ENCODE measurements at regions of chr10 and their contacts with region 1.

Region 1: GRCh38 chr10:511101-511848 is 178.2 kb downstream of the DIP2C start:
- DNase-seq: peak; percentile 96
- H3K4me3 ChIP-seq: no peak overlapping the region
- H3K27ac ChIP-seq: no peak overlapping the region
- H3K4me1 ChIP-seq: peaks cover 3% of the 10 kb centered on the region
- H3K27me3 ChIP-seq: no peaks in the 10 kb centered on the region
- CTCF ChIP-seq: peak; percentile 98 to 99
- POLR2A ChIP-seq: no peak

Region 2: DNA sequence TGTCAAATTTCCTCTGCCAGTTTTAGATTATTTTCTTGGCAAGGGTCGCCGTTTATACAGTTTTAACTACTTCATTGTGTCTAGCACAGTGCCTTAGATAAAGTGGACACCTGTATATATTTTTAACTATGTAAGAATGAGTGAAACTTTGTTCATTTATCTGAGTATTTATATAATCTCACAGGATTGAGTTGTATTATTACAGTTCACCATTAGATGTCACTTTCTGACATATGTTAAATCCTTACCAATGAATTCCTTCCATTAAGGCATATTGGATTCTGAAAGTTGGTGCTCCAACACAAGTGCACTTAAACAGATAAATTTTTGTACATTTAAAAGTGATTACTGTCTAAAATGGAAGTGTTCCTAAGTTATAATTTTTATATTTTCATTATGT is 333.1 kb before region 1 on chr10:
- CTCF ChIA-PET with region 1: no interaction called
- POLR2A ChIA-PET with region 1: no interaction called
- dilution Hi-C with region 1: no loop called
- intact Hi-C with region 1: loop called (anchors 1 kb)
- DNase-seq: peak; percentile 66
- H3K4me3 ChIP-seq: no peak overlapping the region
- H3K27ac ChIP-seq: no peak overlapping the region
- H3K4me1 ChIP-seq: peaks cover 19% of the 10 kb centered on the region
- H3K27me3 ChIP-seq: no peaks in the 10 kb centered on the region
- CTCF ChIP-seq: peak; percentile 10 to 24
- POLR2A ChIP-seq: no peak

Region 3: DNA sequence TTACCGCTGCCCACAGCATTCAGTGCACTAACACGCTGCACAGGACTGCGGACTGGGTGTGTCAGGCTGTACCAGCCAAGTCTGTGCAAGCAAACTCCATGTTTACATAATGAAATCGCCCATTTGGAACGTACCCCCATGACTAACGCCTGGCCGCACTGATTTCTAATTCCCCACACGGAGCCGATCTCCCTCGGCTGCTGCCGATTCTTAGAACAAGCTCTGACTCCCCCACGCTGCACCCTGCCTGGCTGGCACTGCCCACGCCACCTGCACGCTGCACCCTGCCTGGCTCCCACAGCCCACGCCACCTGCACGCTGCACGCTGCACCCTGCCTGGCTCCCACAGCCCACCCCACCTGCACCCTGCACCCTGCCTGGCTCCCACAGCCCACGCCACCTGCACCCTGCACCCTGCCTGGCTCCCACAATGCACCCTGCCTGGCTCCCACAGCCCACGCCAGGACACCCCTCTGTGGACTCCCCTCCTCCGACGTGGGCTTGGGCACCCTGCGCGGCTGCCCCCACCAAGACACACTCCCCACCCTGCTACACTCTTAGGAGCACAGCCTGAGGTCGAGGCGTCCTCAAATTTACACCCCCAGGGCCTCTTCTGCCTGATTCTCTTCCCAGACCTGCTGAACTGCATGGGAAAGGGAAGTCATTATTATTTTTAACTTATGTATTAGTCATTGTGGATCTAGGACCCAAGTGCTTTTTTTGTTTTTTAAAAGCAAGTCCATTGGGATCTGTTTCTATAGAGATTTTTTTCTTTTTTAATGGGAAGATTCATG is 172.6 kb before region 1 on chr10:
- CTCF ChIA-PET with region 1: no interaction called
- POLR2A ChIA-PET with region 1: no interaction called
- dilution Hi-C with region 1: no loop called
- intact Hi-C with region 1: no loop called
- DNase-seq: no peak
- H3K4me3 ChIP-seq: no peak overlapping the region
- H3K27ac ChIP-seq: no peak overlapping the region
- H3K4me1 ChIP-seq: no peaks in the 10 kb centered on the region
- H3K27me3 ChIP-seq: no peaks in the 10 kb centered on the region
- CTCF ChIP-seq: no peak
- POLR2A ChIP-seq: no peak

Region 4: GRCh38 chr10:688603-689426 is 177.5 kb after region 1 on chr10:
- CTCF ChIA-PET with region 1: no interaction called
- POLR2A ChIA-PET with region 1: no interaction called
- dilution Hi-C with region 1: no loop called
- intact Hi-C with region 1: loop called (anchors 1 kb)
- DNase-seq: peak; percentile 30
- H3K4me3 ChIP-seq: peak overlapping the region; percentile 47 to 73 (median 57)
- H3K27ac ChIP-seq: no peak overlapping the region
- H3K4me1 ChIP-seq: peaks cover 8% of the 10 kb centered on the region
- H3K27me3 ChIP-seq: peaks cover 2 to 3% of the 10 kb centered on the region in 2 experiments
- CTCF ChIP-seq: no peak
- POLR2A ChIP-seq: no peak

Region 5: GRCh38 chr10:794466-794865 is 283.2 kb after region 1 on chr10:
- CTCF ChIA-PET with region 1: interaction called, 33 read pairs
- POLR2A ChIA-PET with region 1: no interaction called
- dilution Hi-C with region 1: no loop called
- intact Hi-C with region 1: loop called (anchors 1 kb)
- DNase-seq: no peak
- H3K4me3 ChIP-seq: no peak overlapping the region
- H3K27ac ChIP-seq: no peak overlapping the region
- H3K4me1 ChIP-seq: no peaks in the 10 kb centered on the region
- H3K27me3 ChIP-seq: no peaks in the 10 kb centered on the region
- CTCF ChIP-seq: no peak
- POLR2A ChIP-seq: no peak

Region 6: GRCh38 chr10:987870-988666 is 476.8 kb after region 1 on chr10 and contains the start of gene GTPBP4:
- CTCF ChIA-PET with region 1: no interaction called
- POLR2A ChIA-PET with region 1: interaction called, 4 read pairs
- dilution Hi-C with region 1: no loop called
- intact Hi-C with region 1: loop called (anchors 2 kb)
- DNase-seq: peak; percentile 95
- H3K4me3 ChIP-seq: peak within 1 kb of the TSS; percentile 76 to 94 (median 84)
- H3K27ac ChIP-seq: peak within 1 kb of the TSS; percentile 86
- H3K4me1 ChIP-seq: peaks cover 13% of the 10 kb centered on the region
- H3K27me3 ChIP-seq: no peaks in the 10 kb centered on the region
- CTCF ChIP-seq: no peak
- POLR2A ChIP-seq: peak; percentile 33
- total RNA-seq, gene GTPBP4: 68.9 and 69.3 TPM in 2 replicates

Measured in endothelial cell of umbilical vein (primary cell).